AG04449 (cell line): ENCODE measurements at regions of chr7 and their contacts with region 1.

Region 1: GRCh38 chr7:140003913-140004382 is 58.8 kb downstream of the PARP12 start:
- DNase-seq: no peak
- H3K4me3 ChIP-seq: no peak overlapping the region
- CTCF ChIP-seq: peak; percentile 42

Region 2: GRCh38 chr7:139496528-139496927 is 507.4 kb before region 1 on chr7:
- CTCF ChIA-PET with region 1: interaction called, 93 read pairs
- POLR2A ChIA-PET with region 1: no interaction called
- DNase-seq: no peak
- H3K4me3 ChIP-seq: no peak overlapping the region
- CTCF ChIP-seq: no peak

Region 3: GRCh38 chr7:139543801-139544603 is 459.9 kb before region 1 on chr7:
- CTCF ChIA-PET with region 1: no interaction called
- POLR2A ChIA-PET with region 1: no interaction called
- DNase-seq: no peak
- H3K4me3 ChIP-seq: no peak overlapping the region
- CTCF ChIP-seq: no peak

Region 4: DNA sequence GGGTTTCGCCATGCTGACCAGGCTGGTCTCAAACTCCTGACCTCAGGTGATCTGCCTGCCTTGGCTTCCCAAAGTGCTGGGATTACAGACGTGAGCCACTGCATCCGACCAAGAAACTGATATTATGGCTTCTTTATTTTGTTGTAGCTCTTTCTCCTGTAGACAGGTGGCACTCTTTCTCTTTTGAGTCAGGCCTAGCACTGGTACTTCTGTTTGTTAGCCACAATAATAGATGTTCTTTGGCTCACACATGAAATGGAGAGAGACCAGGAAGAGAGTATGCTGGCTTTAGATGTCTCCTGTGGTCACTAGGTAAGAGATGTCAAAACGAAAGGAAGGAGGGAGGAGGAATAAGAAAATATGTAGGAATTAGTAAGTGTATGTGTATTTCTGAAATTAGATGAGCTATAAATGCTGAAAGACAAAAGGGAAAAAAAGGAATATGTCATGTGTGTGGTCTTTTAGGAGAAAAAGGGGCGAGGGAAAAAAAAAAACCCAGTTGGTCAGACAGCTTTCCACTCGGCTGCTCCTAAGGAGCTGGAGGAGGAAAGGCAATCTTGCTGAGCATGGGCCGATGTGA is 401.7 kb before region 1 on chr7:
- CTCF ChIA-PET with region 1: interaction called, 136 read pairs
- POLR2A ChIA-PET with region 1: no interaction called
- DNase-seq: peak; percentile 10
- H3K4me3 ChIP-seq: no peak overlapping the region
- CTCF ChIP-seq: peak; percentile 54

Region 5: GRCh38 chr7:139620676-139621344 is 383.1 kb before region 1 on chr7:
- CTCF ChIA-PET with region 1: interaction called, 296 read pairs
- POLR2A ChIA-PET with region 1: no interaction called
- DNase-seq: no peak
- H3K4me3 ChIP-seq: no peak overlapping the region
- CTCF ChIP-seq: peak; percentile 56

Region 6: GRCh38 chr7:139635526-139636302 is 368.2 kb before region 1 on chr7:
- CTCF ChIA-PET with region 1: interaction called, 20 read pairs
- POLR2A ChIA-PET with region 1: no interaction called
- DNase-seq: no peak
- H3K4me3 ChIP-seq: no peak overlapping the region
- CTCF ChIP-seq: no peak

Region 7: GRCh38 chr7:139886206-139886605 is 117.7 kb before region 1 on chr7:
- CTCF ChIA-PET with region 1: no interaction called
- POLR2A ChIA-PET with region 1: no interaction called
- DNase-seq: no peak
- H3K4me3 ChIP-seq: no peak overlapping the region
- CTCF ChIP-seq: no peak

Region 8: GRCh38 chr7:139987691-139988516 is 16.0 kb before region 1 on chr7:
- CTCF ChIA-PET with region 1: interaction called, 31 read pairs
- POLR2A ChIA-PET with region 1: no interaction called
- DNase-seq: no peak
- H3K4me3 ChIP-seq: no peak overlapping the region
- CTCF ChIP-seq: no peak